AG04449 (cell line): ENCODE measurements at regions of chr1 and their contacts with region 1.

Region 1: DNA sequence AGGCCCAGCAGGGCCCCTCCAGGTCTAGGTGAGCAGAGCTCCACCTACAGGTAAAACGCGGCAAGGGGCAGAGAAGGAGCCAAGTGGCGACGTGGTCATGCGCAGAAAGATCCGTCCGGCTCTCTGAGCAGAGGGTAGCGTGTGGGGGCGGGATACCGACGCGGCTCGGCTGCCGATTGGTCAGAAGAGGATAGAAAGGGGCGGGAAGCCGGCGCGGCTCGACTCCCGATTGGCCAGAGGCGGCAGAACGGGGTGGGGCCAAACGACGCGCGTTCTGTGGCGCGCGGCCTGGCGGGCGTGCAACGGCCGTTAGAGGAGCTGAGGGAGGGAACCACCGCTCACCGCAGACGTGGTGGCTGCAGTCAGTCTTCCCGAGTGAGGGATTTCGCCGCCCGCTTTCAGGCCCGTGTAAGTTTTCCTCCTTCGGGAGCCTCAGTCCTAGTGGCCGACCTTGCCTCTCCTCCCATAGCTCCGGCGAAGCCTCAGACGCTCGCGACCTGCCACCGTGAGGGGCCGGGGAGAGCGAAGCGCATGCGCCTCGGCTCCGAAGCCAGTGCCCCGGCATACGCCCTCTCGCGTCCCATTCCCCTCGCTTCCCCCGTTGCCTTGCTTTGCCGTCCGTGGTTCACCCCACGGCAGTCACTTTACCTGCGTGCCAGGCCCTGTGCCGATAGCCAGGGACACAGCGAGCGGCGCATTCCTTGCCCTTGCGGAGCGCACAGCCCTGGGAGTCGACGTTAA is at the start of gene CEP85:
- DNase-seq: peak; percentile 75
- H3K4me3 ChIP-seq: peak within 1 kb of the TSS; percentile 100
- CTCF ChIP-seq: peak; percentile 90

Region 2: DNA sequence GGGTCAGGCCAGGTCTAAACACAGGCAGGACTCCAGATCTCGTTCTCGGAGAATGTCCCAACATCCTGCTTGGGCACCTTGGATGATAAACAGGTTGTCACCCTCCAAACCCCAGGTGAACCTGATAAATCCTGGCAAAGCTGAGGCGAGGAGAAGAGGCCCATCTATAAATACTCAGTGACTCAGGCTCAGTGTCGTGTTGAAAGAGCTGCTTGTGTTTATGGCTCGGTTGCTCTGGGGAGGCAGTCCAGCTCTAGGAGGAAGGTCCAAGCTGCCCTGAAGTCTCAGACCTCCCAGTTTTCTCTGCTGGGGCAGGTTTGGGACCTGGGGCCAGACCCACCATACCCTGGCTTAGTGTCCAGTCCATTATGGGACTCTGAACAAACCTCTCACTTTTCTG is 150.8 kb before region 1 on chr1:
- CTCF ChIA-PET with region 1: no interaction called
- POLR2A ChIA-PET with region 1: no interaction called
- DNase-seq: no peak
- H3K4me3 ChIP-seq: no peak overlapping the region
- CTCF ChIP-seq: no peak

Region 3: DNA sequence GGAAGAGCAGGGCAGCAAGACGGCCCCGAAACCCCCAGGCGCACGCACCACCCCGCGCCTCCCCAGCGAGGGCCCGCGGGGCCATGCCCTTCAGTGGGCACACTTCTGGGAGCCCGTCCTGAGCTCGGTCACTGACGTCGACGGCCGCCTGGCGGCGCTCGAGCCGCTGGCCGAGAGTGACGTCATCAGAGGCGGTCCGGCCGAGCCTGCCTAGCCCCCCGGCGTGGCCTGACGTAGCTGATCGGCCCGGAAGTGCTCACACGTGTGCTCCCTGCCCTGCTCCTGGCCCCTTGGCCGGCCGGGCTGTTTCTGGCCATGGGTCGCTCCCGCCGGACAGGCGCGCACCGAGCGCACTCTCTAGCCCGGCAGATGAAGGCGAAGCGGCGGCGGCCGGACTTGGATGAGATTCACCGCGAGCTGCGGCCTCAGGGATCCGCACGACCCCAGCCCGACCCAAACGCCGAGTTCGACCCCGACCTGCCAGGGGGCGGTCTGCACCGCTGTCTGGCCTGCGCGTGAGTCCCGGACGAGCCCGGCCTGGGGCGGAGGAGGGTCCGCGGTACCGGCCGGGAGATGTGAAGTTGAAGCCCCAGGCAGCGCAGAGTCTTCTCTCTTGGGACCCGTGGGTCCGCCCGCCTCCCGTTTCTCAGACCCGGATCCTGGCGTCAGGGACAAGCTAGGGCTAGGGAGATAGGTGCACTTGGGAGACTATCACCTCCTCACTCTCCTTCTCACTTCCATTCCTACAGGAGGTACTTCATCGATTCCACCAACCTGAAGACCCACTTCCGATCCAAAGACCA is 64.2 kb before region 1 on chr1 and contains the start of gene ZNF593:
- CTCF ChIA-PET with region 1: interaction called, 25 read pairs
- POLR2A ChIA-PET with region 1: no interaction called
- DNase-seq: peak; percentile 19
- H3K4me3 ChIP-seq: peak within 1 kb of the TSS; percentile 93
- CTCF ChIP-seq: peak; percentile 100

Region 4: GRCh38 chr1:26218906-26219494 is 15.1 kb before region 1 on chr1:
- CTCF ChIA-PET with region 1: interaction called, 27 read pairs
- POLR2A ChIA-PET with region 1: no interaction called
- DNase-seq: no peak
- H3K4me3 ChIP-seq: no peak overlapping the region
- CTCF ChIP-seq: no peak

Region 5: GRCh38 chr1:26265405-26265804 is 31.3 kb after region 1 on chr1:
- CTCF ChIA-PET with region 1: interaction called, 17 read pairs
- POLR2A ChIA-PET with region 1: no interaction called
- DNase-seq: no peak
- H3K4me3 ChIP-seq: no peak overlapping the region
- CTCF ChIP-seq: no peak

Region 6: DNA sequence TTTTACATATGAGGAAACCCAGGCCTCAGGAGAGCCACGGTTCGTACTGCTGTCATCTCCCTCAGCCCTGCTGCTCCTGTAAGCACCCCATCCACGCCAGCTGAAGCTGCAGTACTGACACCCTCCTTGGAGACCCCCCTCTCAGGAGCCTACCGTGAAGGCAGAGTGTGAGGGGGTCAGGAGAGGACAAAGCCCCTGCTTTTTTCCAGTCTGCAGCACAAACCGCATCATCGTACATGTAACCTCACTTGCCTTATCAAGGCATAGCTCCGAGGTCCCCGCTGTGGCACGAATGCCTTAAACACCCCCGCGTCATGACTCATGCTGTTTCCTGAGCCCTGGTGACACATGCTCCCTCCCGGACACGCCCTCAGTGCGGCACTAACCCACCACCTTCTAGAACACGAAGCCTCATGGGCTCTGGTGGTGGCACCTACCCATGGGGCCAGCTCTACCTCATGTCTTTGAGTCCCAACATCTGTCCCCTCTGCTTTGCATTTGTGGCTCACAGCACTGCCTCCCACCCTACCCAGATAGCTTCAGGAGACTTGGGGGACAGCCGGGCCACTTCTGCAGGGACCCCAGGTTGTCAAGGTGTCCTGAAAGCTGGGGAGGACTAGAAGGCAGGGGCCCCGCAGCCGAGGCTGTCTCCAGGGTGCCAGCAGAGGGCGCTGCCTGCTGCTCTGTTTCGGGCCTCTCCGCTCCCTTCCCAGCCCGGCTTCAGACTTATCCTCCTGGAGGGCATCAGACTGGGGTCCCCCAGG is 50.7 kb after region 1 on chr1:
- CTCF ChIA-PET with region 1: interaction called, 16 read pairs
- POLR2A ChIA-PET with region 1: interaction called, 4 read pairs
- DNase-seq: peak; percentile 69
- H3K4me3 ChIP-seq: no peak overlapping the region; the same call in 1 of the 2 replicates
- CTCF ChIP-seq: peak; percentile 85

Region 7: DNA sequence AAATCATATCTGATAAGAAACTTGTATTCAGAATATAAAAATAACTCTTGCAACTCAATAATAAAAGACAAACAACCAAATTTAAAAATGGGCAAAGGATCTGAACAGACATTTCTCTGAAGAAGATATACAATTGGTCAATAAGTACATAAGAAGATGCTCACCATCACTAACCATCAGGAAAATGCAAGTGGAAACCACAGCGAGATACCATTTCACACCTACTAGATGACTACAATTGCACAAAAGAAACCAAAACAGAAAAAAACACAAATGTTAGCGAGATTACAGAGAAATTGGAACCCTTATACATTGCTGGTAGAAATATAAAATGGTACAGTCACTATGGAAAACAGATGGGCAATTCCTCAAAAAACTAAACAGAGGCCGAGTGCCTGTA is 150.0 kb after region 1 on chr1:
- CTCF ChIA-PET with region 1: no interaction called
- POLR2A ChIA-PET with region 1: no interaction called
- DNase-seq: no peak
- H3K4me3 ChIP-seq: no peak overlapping the region
- CTCF ChIP-seq: no peak